Activated naive CD4-positive, alpha-beta T cell treated with anti-CD3 and anti-CD28 coated beads for 36 hours (primary cell): ENCODE measurements at regions of chr12 and their contacts with region 1.

Region 1: DNA sequence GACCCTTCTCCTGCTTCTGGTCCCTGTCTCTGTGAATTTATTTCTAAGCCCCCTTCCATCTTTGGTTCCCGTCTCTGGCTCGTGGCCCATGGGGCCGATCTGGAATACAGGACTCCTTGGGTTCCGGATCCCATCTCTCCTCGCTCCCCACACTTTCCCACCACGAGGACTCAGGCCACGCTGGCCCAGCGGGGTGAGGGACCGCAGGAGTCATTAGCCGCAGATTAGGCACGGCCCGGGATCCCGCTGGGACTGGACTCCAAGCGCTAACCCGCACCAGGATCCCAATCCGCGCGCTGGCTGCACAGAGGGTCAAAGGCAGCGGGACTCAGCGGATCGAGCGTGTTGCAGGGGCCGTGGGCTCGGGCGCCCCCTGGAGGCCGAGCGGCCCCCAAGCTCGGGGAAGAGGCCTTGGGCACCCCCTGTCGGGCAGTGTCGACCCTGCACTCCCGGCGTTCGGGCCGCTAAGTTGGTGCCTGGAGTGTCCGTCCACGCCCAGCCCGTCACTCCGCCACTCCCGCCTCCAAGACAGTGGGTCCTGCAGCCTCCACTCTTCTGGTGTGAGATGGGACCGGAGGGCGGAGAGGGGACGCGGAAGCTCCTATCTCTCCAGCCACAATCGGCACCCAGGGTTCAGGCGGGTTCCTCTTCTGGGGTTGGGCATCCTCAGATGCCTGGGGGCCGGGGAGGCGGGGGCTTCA is 9.5 kb downstream of the SHMT2 start:
- DNase-seq: peak; percentile 91
- H3K4me3 Mint-ChIP-seq: peak overlapping the region; percentile 93
- H3K27ac Mint-ChIP-seq: peak overlapping the region; percentile 66
- H3K4me1 Mint-ChIP-seq: peaks cover 66% of the 10 kb centered on the region
- H3K27me3 Mint-ChIP-seq: peaks cover 50% of the 10 kb centered on the region

Region 2: DNA sequence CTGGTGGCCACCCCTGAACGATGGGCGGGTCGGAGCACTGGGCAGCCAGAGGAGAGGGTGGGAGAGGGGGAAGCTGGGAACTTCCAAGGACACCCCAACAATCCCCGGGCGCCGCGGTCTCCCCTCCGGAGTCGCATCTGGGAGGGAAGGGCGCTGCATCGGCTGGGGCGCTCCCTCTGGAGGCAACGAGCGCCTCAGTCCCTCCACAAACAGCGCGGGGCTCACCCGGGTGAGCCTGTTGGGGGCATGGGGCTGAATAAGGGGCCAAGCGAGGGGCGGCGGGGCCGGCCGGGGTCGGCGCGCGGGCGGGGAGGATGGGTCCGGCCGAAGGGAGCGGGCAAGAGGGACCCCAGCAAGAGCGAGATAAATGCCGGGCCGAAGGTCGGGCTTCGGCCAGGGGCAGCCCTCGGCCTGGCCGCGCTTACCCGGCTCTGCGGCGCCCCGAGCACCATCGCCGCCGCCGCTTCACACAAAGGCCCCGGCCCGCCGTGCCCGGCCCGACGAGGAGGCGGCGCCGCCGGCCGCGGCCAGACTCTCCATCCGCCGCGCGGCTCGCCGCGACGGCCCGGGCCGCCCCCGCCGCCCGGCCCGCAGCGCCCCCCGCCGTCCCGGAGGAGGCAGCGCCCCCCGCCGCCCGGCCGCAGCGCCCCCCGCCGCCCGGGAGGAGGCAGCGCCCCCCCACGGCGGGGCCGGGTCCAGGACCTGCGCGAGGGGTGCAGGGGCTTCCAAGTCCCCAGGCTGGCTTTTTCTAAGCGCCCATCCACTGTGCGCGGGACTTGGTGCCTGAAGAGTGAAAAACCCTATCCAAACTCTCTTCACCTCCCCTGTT is 232.8 kb before region 1 on chr12 and contains the start of gene ZBTB39:
- CTCF ChIA-PET with region 1: interaction called, 3 read pairs
- intact Hi-C with region 1: loop called (anchors 5 kb)
- DNase-seq: peak; percentile 59
- H3K4me3 Mint-ChIP-seq: peak within 1 kb of the TSS; percentile 92
- H3K27ac Mint-ChIP-seq: peak within 1 kb of the TSS; percentile 90
- H3K4me1 Mint-ChIP-seq: peaks cover 72% of the 10 kb centered on the region
- H3K27me3 Mint-ChIP-seq: no peaks in the 10 kb centered on the region
- total RNA-seq, gene ZBTB39: 5.1 to 5.5 TPM

Region 3: GRCh38 chr12:57124259-57124877 is 114.6 kb before region 1 on chr12:
- CTCF ChIA-PET with region 1: interaction called, 5 read pairs
- intact Hi-C with region 1: loop called (anchors 1 kb)
- DNase-seq: peak; percentile 90
- H3K4me3 Mint-ChIP-seq: no peak overlapping the region
- H3K27ac Mint-ChIP-seq: no peak overlapping the region
- H3K4me1 Mint-ChIP-seq: peaks cover under 1% of the 10 kb centered on the region
- H3K27me3 Mint-ChIP-seq: no peaks in the 10 kb centered on the region

Region 4: DNA sequence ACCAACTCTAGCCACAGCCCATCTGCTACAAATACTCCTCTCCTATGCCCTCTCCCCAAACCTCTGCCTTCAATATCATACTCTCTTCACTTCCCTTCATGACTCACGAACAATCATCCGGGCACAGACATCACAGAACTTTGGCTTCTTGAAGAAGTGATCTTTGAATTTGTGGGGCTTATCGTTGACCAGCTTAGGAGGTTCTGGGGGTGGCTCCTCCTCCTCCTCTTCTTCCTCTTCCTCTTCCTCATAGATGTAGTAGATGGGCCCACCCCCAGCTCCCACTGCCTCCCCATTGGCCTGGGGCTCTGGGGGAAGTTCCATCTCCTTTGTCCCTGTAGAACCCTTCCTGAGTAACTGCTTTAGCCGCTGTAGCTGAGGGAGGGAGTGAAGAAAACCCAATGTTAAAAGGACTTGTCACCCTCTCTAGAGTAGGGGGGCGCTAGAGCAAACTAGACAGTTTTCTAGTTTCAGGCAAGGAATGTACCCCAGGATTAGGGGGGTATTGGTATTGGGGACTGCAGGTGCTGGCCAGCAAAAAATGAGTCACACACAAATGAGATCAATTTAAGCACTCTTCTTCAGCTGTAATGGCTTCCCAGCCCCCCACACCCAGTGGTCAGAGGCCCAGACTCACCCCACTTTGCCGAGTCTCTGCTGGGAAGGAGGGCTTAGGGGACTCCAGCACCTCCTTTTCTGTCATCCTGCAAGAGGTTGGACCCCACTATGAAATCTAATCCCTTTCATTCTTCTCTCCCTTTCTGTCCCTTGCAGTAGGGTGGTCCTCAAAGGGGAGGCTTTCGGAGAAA is 10.1 kb after region 1 on chr12:
- CTCF ChIA-PET with region 1: interaction called, 24 read pairs
- intact Hi-C with region 1: no loop called
- DNase-seq: no peak
- H3K4me3 Mint-ChIP-seq: peak overlapping the region; percentile 1
- H3K27ac Mint-ChIP-seq: no peak overlapping the region
- H3K4me1 Mint-ChIP-seq: peaks cover 1% of the 10 kb centered on the region
- H3K27me3 Mint-ChIP-seq: peaks cover 3% of the 10 kb centered on the region

Region 5: DNA sequence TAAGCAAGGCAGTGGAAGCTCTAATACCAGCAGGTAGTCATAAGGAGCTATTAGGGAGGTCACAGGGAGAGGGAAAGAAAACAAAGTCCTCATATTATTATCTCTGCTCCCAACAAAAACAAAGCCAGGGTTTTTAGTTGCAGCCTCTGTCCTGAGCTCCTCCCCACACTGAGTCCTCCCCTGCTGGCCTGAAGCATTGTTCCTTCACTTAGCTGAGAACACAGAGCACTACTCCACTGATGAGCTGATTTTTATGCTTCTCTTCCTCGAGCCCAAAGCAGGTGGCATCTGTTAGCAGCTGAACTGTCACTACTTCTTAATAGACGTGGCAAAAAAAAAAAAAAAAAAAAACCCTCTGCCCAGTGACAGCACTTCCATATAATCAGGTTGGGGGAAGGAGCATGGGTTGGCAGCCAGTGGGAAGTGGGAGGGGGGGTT is 22.4 kb after region 1 on chr12:
- CTCF ChIA-PET with region 1: interaction called, 24 read pairs
- intact Hi-C with region 1: no loop called
- DNase-seq: no peak
- H3K4me3 Mint-ChIP-seq: no peak overlapping the region
- H3K27ac Mint-ChIP-seq: no peak overlapping the region
- H3K4me1 Mint-ChIP-seq: no peaks in the 10 kb centered on the region
- H3K27me3 Mint-ChIP-seq: no peaks in the 10 kb centered on the region

Region 6: GRCh38 chr12:57355734-57356133 is 116.7 kb after region 1 on chr12:
- CTCF ChIA-PET with region 1: no interaction called
- intact Hi-C with region 1: no loop called
- DNase-seq: no peak
- H3K4me3 Mint-ChIP-seq: no peak overlapping the region
- H3K27ac Mint-ChIP-seq: no peak overlapping the region
- H3K4me1 Mint-ChIP-seq: no peaks in the 10 kb centered on the region
- H3K27me3 Mint-ChIP-seq: no peaks in the 10 kb centered on the region

Region 7: GRCh38 chr12:57452937-57453509 is 214.0 kb after region 1 on chr12:
- CTCF ChIA-PET with region 1: interaction called, 14 read pairs
- intact Hi-C with region 1: loop called (anchors 2 kb)
- DNase-seq: peak; percentile 82
- H3K4me3 Mint-ChIP-seq: no peak overlapping the region
- H3K27ac Mint-ChIP-seq: peak overlapping the region; percentile 19
- H3K4me1 Mint-ChIP-seq: peaks cover 17% of the 10 kb centered on the region
- H3K27me3 Mint-ChIP-seq: no peaks in the 10 kb centered on the region

Region 8: DNA sequence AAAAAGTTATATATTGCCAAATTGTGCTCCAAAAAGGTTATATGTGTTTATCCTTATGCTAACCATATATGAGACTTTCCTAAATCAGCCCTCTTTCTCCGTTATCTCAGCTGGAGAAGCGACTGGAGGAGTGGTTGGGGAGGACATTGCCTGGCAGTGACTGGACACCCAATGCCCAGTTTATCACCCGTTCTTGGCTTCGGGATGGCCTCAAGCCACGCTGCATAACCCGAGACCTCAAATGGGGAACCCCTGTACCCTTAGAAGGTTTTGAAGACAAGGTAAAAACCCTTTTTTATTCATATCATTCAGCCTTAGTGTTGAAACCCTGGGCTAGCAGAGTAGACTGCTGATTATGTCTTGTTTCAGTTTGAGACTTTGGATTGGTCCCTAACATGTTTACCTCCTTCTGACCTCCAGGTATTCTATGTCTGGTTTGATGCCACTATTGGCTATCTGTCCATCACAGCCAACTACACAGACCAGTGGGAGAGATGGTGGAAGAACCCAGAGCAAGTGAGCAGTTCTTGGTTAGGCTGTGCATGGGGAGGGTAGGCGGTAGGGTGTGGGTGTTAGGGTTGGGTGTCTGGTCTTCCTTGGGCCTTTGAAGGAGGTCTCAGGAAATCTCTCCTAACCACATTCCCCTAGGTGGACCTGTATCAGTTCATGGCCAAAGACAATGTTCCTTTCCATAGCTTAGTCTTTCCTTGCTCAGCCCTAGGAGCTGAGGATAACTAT is 272.8 kb after region 1 on chr12:
- CTCF ChIA-PET with region 1: no interaction called
- intact Hi-C with region 1: no loop called
- DNase-seq: no peak
- H3K4me3 Mint-ChIP-seq: no peak overlapping the region
- H3K27ac Mint-ChIP-seq: peak overlapping the region; percentile 69
- H3K4me1 Mint-ChIP-seq: peaks cover 7% of the 10 kb centered on the region
- H3K27me3 Mint-ChIP-seq: no peaks in the 10 kb centered on the region

Region 9: GRCh38 chr12:57751788-57752667 is 513.0 kb after region 1 on chr12 and contains the start of gene CDK4:
- CTCF ChIA-PET with region 1: no interaction called
- intact Hi-C with region 1: loop called (anchors 5 kb)
- DNase-seq: peak; percentile 99
- H3K4me3 Mint-ChIP-seq: peak within 1 kb of the TSS; percentile 100
- H3K27ac Mint-ChIP-seq: peak within 1 kb of the TSS; percentile 99
- H3K4me1 Mint-ChIP-seq: peaks cover 51% of the 10 kb centered on the region
- H3K27me3 Mint-ChIP-seq: no peaks in the 10 kb centered on the region
- total RNA-seq, gene CDK4: 194 to 202 TPM